SK-N-SH (cell line): ENCODE measurements at regions of chr11 and their contacts with region 1.

Region 1: DNA sequence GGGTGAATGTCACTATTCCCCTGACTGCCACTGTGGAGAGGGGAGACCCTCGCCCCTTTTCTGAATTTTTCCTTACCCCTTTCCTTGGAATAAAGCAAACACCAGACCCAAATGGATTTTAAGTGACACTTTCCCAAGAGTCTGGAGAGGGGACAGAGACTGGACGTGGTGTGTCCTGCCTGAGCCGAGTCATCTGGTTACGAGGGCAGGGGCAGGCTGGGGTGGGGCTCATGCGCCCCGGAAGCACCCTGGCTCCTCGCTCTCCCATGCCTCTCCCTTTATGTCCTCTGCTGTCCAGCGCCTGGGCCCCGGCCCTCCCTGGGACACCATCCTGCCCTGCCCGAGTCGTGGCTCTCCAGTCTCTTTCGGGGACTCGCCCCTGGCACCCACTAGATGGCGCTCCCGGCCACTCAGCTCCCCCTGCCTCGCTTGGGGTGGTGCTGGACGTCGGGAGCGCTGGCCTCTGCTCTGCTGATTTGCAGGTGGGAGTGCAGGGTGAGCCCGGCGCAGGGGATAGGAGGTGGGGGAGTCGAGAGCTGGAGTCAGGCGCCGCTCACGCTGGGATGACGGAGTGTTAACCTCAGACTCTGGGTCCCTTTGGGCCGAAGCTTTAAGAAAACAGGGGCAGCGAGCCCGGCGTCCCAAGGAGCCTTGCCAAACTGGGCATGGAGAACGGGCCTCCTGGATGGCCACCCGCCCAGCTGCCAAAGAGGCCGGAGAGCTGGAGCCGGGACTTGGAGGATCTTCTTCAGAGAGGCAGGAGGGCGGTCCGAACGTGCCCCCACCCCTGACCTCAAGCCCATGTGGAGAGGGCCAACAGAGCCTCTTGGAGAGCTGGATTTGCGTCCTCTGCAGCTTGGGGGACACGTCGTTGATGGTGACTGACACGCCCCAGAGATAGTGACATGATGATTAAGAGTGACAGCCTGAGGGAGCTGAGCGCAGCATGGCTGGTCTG is 89.9 kb downstream of the RPS6KA4 start:
- DNase-seq: peak; percentile 94
- H3K4me3 ChIP-seq: peak overlapping the region; percentile 31 to 43
- H3K27ac ChIP-seq: no peak overlapping the region; a peak in 1 of 4 replicates
- H3K4me1 ChIP-seq: peaks cover 0 to 16% of the 10 kb centered on the region in 2 experiments; a peak in 1 of 4 replicates
- H3K27me3 ChIP-seq: peaks cover 12% of the 10 kb centered on the region; the same call in 1 of the 2 replicates
- CTCF ChIP-seq: peak; percentile 81
- EP300 ChIP-seq: no peak
- RAD21 ChIP-seq: peak; percentile 70

Region 2: GRCh38 chr11:64379160-64379559 is 69.7 kb before region 1 on chr11:
- CTCF ChIA-PET with region 1: no interaction called
- POLR2A ChIA-PET with region 1: no interaction called
- DNase-seq: no peak
- H3K4me3 ChIP-seq: no peak overlapping the region
- H3K27ac ChIP-seq: no peak overlapping the region
- H3K4me1 ChIP-seq: no peaks in the 10 kb centered on the region
- H3K27me3 ChIP-seq: no peaks in the 10 kb centered on the region
- CTCF ChIP-seq: no peak
- EP300 ChIP-seq: no peak
- RAD21 ChIP-seq: no peak

Region 3: GRCh38 chr11:64419818-64420485 is 28.9 kb before region 1 on chr11:
- CTCF ChIA-PET with region 1: interaction called, 37 read pairs
- POLR2A ChIA-PET with region 1: no interaction called
- DNase-seq: no peak
- H3K4me3 ChIP-seq: no peak overlapping the region
- H3K27ac ChIP-seq: no peak overlapping the region
- H3K4me1 ChIP-seq: no peaks in the 10 kb centered on the region
- H3K27me3 ChIP-seq: no peaks in the 10 kb centered on the region
- CTCF ChIP-seq: no peak
- EP300 ChIP-seq: no peak
- RAD21 ChIP-seq: no peak

Region 4: DNA sequence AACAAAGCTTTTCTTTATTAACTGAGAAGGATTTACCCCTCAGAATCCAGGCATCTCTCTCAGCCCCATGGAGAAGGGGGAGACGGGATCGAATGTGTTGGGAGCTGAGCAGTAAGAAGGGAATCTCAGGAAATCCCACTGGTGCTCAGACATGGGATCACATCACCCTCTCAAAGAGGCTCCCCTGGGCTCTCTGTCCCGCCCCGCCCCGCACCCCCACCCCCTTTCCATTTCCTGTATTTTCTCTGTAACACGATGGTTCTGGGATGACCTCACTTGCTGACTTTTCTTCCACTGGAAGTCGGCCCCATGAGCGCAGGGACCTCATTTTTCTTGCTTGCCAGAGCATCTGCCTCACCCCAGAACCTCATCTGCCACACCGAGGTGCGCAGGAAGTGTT is 10.1 kb after region 1 on chr11:
- CTCF ChIA-PET with region 1: interaction called, 27 read pairs
- POLR2A ChIA-PET with region 1: no interaction called
- DNase-seq: no peak
- H3K4me3 ChIP-seq: no peak overlapping the region
- H3K27ac ChIP-seq: no peak overlapping the region
- H3K4me1 ChIP-seq: no peaks in the 10 kb centered on the region; a peak in 1 of 4 replicates
- H3K27me3 ChIP-seq: no peaks in the 10 kb centered on the region
- CTCF ChIP-seq: no peak
- EP300 ChIP-seq: no peak
- RAD21 ChIP-seq: no peak

Region 5: DNA sequence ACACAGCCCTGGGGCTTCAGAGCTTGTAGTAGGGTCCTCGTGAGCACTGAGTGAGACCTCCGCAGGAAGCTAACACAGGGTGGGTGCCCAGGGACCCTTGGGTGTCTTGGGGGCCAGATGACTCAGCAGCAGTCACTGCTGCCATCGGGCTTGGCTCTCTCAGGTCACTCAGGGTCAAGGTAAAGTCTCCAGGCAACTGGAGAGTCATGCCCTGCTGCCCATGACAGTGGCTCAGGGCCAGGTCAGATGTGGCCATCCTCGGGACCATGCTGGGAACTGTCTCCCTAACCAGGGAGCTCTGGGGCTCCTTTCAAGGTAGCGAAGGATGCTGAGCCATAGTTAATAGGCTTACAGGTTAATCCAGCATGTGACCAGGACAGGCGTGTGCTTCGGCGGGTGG is 97.7 kb after region 1 on chr11:
- CTCF ChIA-PET with region 1: interaction called, 12 read pairs
- POLR2A ChIA-PET with region 1: no interaction called
- DNase-seq: no peak
- H3K4me3 ChIP-seq: no peak overlapping the region
- H3K27ac ChIP-seq: no peak overlapping the region
- H3K4me1 ChIP-seq: no peaks in the 10 kb centered on the region
- H3K27me3 ChIP-seq: no peaks in the 10 kb centered on the region; the same call in 1 of the 2 replicates
- CTCF ChIP-seq: no peak
- EP300 ChIP-seq: no peak
- RAD21 ChIP-seq: no peak

Region 6: GRCh38 chr11:64644647-64645275 is 195.9 kb after region 1 on chr11:
- CTCF ChIA-PET with region 1: interaction called, 121 read pairs
- POLR2A ChIA-PET with region 1: no interaction called
- DNase-seq: peak; percentile 63
- H3K4me3 ChIP-seq: no peak overlapping the region
- H3K27ac ChIP-seq: no peak overlapping the region
- H3K4me1 ChIP-seq: peaks cover 0 to 37% of the 10 kb centered on the region in 2 experiments; a peak in 1 of 4 replicates
- H3K27me3 ChIP-seq: peaks cover 48% of the 10 kb centered on the region
- CTCF ChIP-seq: no peak
- EP300 ChIP-seq: no peak
- RAD21 ChIP-seq: peak; percentile 30; the same call in 1 of the 2 replicates

Region 7: DNA sequence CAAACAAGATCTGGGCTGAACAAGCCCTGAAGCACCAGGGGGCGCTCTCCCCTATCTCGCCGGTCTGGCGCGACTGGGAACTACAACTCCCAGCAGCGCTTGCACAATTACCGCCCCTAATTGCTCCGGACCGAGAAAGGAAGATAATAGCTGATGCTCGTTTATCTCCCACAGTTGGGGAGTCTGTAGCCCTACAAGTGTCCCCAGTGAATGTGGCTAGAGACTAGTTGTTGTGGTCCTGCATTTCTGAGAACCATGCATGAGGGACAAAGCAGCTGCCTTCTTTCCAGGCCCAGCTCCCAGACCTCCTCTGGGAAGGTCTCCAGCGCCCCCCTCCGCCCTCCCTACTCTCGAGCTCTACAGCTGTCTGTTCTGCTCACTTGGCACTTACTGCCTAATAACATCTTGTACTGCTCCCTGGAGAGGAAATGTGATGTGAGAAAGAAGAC is 239.7 kb after region 1 on chr11:
- CTCF ChIA-PET with region 1: interaction called, 14 read pairs
- POLR2A ChIA-PET with region 1: no interaction called
- DNase-seq: peak; percentile 90
- H3K4me3 ChIP-seq: peak overlapping the region; percentile 47 to 50; a peak in 3 of 4 replicates
- H3K27ac ChIP-seq: peak overlapping the region in 1 of 2 experiments; percentile 96; a peak in 2 of 4 replicates
- H3K4me1 ChIP-seq: peaks cover 0 to 34% of the 10 kb centered on the region in 2 experiments; a peak in 2 of 4 replicates
- H3K27me3 ChIP-seq: peaks cover 13% of the 10 kb centered on the region; the same call in 1 of the 2 replicates
- CTCF ChIP-seq: peak; percentile 94
- EP300 ChIP-seq: no peak; a peak in 1 of 4 replicates
- RAD21 ChIP-seq: peak; percentile 81